Mammary epithelial cell (primary cell): ENCODE measurements at regions of chr1 and their contacts with region 1.

Region 1: GRCh38 chr1:224454397-224455066 is 19.9 kb upstream of the WDR26 start:
- DNase-seq: peak; percentile 93
- H3K4me3 ChIP-seq: peak overlapping the region in 1 of 3 experiments; percentile 23
- H3K27ac ChIP-seq: peak overlapping the region; percentile 56
- H3K4me1 ChIP-seq: peaks cover 58% of the 10 kb centered on the region
- H3K27me3 ChIP-seq: no peaks in the 10 kb centered on the region
- CTCF ChIP-seq: no peak

Region 2: GRCh38 chr1:224113918-224114786 is 340.4 kb before region 1 on chr1 and contains the start of gene FBXO28:
- CTCF ChIA-PET with region 1: no interaction called
- dilution Hi-C with region 1: no loop called
- in situ Hi-C with region 1: no loop called
- intact Hi-C with region 1: loop called (anchors 1 kb)
- DNase-seq: peak; percentile 88
- H3K4me3 ChIP-seq: peak within 1 kb of the TSS; percentile 58 to 85 (median 75)
- H3K27ac ChIP-seq: peak within 1 kb of the TSS; percentile 72
- H3K4me1 ChIP-seq: peaks cover 16% of the 10 kb centered on the region
- H3K27me3 ChIP-seq: no peaks in the 10 kb centered on the region
- CTCF ChIP-seq: no peak
- total RNA-seq, gene FBXO28: 41.0 to 49.4 TPM

Region 3: DNA sequence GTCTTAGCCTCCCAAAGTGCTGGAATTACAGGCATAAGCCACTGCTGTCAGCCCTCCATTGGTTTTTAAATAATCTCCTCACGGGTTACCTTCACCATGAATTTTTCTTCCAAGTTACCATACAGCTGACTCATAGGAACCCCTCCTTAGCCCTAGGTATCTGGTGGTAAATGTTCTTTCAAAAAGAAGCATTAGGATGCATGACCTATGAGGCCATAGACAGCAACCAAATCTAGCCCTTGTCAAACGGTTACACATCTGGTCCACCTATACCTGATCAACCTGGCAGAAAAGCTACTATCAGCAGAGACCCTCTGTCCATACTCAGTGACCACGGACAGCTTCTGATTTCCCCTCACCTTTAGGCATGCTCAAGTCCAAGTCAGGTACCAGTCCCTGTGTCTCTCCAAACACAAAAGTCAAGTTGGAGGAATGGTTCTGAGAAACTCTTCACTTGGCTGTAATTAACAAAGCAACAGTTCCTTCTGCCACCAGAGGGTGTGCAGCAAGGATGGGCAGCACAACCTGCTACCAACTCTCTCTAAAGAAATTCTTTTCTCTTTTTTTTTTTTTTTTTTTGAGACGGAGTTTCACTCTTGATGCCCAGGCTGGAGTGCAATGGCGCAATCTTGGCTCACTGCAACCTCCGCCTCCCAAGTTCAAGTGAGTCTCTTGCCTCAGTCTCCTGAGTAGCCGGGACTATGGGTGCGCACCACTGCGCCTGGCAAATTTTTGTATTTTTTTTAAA is 284.0 kb before region 1 on chr1:
- CTCF ChIA-PET with region 1: no interaction called
- dilution Hi-C with region 1: no loop called
- in situ Hi-C with region 1: no loop called
- intact Hi-C with region 1: loop called (anchors 5 kb)
- DNase-seq: peak; percentile 28
- H3K4me3 ChIP-seq: no peak overlapping the region
- H3K27ac ChIP-seq: no peak overlapping the region
- H3K4me1 ChIP-seq: no peaks in the 10 kb centered on the region
- H3K27me3 ChIP-seq: no peaks in the 10 kb centered on the region
- CTCF ChIP-seq: peak; percentile 33 to 68

Region 4: DNA sequence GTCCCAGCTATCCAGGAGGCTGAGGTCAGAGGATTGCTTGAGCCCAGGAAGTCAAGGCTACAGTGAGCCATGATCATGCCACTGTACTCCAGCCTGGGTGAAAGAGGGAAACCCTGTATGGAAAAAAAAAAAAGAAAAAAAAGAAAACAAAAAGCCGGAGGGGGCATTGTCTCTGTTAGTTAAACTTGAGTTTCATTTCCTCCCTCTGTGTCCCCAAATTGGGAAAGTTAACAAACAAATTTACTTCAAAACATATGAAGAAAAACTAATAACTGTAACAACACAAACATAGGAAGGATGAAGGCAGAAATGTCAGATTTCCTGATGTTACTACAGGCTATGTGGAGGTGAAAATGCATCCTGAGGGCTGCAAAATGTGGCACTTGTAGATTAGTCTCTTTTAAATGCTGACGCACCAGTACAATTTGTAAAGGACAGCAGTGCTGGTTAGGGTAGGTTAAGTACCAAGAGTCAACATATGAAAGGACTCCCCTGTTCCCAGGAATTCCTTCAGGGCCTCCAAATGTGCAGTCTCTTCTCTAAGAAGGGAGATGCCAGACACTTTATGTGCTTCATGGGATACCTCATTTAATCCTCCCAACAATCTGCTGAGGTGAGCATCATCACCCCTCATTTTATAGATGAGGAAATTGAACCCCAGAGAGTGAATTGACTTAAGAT is 218.6 kb before region 1 on chr1:
- CTCF ChIA-PET with region 1: no interaction called
- dilution Hi-C with region 1: no loop called
- in situ Hi-C with region 1: no loop called
- intact Hi-C with region 1: no loop called
- DNase-seq: no peak
- H3K4me3 ChIP-seq: no peak overlapping the region
- H3K27ac ChIP-seq: no peak overlapping the region
- H3K4me1 ChIP-seq: no peaks in the 10 kb centered on the region
- H3K27me3 ChIP-seq: no peaks in the 10 kb centered on the region
- CTCF ChIP-seq: no peak

Region 5: GRCh38 chr1:224329842-224330753 is 124.4 kb before region 1 on chr1 and contains the start of gene NVL:
- CTCF ChIA-PET with region 1: no interaction called
- dilution Hi-C with region 1: no loop called
- in situ Hi-C with region 1: no loop called
- intact Hi-C with region 1: loop called (anchors 5 kb)
- DNase-seq: peak; percentile 89
- H3K4me3 ChIP-seq: peak within 1 kb of the TSS; percentile 64 to 98 (median 87)
- H3K27ac ChIP-seq: peak within 1 kb of the TSS; percentile 95
- H3K4me1 ChIP-seq: peaks cover 14% of the 10 kb centered on the region
- H3K27me3 ChIP-seq: no peaks in the 10 kb centered on the region
- CTCF ChIP-seq: no peak
- total RNA-seq, gene NVL: 24.3 to 28.8 TPM

Region 6: DNA sequence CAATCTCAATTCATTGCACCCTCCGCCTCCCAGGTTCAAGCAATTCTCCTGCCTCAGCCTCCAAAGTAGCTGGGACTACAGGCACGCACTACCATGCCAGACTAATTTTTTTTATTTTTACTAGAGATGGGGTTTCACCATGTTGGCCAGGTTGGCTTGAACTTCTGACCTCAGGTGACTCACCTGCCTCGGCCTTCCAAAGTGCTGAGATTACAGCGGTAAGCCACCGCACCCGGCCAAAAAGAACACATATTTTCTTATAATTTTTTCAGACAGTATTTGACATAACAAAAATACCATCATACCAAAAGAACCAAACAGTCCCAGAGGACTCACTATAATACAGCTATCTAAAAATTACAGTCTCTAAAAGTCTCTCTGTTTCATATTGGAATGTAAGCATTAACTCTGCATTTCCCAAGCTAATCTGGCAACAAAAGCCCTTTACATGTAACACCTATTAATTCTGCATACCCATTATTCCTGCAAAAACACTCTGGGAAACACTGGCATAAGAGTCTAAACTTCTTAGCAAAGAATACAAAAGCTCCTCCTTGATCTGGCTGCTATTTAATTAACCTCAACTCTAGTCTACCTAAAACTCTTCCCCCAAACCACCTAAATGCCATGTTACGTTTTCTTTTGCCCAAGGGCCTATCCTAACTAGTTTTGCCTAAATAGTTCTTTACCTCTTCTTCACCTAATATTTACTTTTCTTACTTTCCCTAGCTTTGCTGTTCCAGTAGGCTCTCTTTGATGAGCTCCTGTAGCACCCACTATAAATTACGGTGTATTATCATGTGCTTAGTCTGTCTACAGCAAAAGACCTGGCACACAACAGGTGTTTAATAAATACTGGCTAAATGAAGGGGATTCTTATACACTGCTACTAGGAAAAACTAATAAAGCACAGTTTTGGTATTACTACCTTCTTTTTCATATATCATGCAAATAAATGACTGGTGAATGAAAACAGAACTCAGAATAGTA is 46.7 kb before region 1 on chr1:
- CTCF ChIA-PET with region 1: no interaction called
- dilution Hi-C with region 1: no loop called
- in situ Hi-C with region 1: no loop called
- intact Hi-C with region 1: loop called (anchors 1 kb)
- DNase-seq: peak; percentile 77
- H3K4me3 ChIP-seq: no peak overlapping the region
- H3K27ac ChIP-seq: no peak overlapping the region
- H3K4me1 ChIP-seq: peaks cover 9% of the 10 kb centered on the region
- H3K27me3 ChIP-seq: no peaks in the 10 kb centered on the region
- CTCF ChIP-seq: no peak

Region 7: GRCh38 chr1:224434691-224435317 is 19.7 kb before region 1 on chr1 and contains the start of gene WDR26:
- CTCF ChIA-PET with region 1: interaction called, 5 read pairs
- dilution Hi-C with region 1: no loop called
- in situ Hi-C with region 1: no loop called
- intact Hi-C with region 1: loop called (anchors 1 kb)
- DNase-seq: peak; percentile 74
- H3K4me3 ChIP-seq: peak within 1 kb of the TSS; percentile 62 to 91 (median 71)
- H3K27ac ChIP-seq: peak within 1 kb of the TSS; percentile 74
- H3K4me1 ChIP-seq: peaks cover 41% of the 10 kb centered on the region
- H3K27me3 ChIP-seq: no peaks in the 10 kb centered on the region
- CTCF ChIP-seq: peak in 1 of 2 donors; percentile 30
- total RNA-seq, gene WDR26: 56.5 to 74.5 TPM

Region 8: GRCh38 chr1:224497714-224498573 is 43.4 kb after region 1 on chr1:
- CTCF ChIA-PET with region 1: no interaction called
- dilution Hi-C with region 1: no loop called
- in situ Hi-C with region 1: no loop called
- intact Hi-C with region 1: loop called (anchors 2 kb)
- DNase-seq: peak; percentile 90
- H3K4me3 ChIP-seq: peak overlapping the region in 2 of 3 experiments; percentile 40 to 42
- H3K27ac ChIP-seq: peak overlapping the region; percentile 99
- H3K4me1 ChIP-seq: peaks cover 38% of the 10 kb centered on the region
- H3K27me3 ChIP-seq: no peaks in the 10 kb centered on the region
- CTCF ChIP-seq: no peak